ENCODE measurements at regions of chrX and their contacts with region 1.

Region 1: DNA sequence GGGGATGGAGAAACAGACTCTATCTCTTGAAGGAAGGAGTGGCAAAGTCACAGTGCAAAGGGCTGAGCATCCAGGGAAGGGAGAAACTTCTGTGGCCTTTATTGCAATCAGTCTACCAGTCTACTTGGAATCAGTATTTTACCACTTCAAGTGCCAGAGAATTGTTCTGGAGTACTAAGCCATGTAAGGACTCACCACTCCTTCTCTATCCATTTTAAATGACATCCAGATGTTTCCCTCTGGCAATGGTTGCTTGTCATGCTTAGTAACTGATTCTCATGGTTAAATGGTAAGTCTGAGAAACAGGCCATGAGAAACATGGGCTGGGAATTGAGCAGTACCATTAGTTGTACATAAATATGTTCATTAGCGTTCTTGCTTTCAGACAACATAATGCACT is 21.1 kb upstream of the SMIM10 start:
- DNase-seq: no peak
- H3K4me3 Mint-ChIP-seq: no peak overlapping the region
- H3K27ac Mint-ChIP-seq: no peak overlapping the region
- H3K4me1 Mint-ChIP-seq: no peaks in the 10 kb centered on the region
- H3K27me3 Mint-ChIP-seq: peaks cover 4% of the 10 kb centered on the region

Region 2: GRCh38 chrX:135003876-135004623 is 34.3 kb after region 1 on chrX:
- CTCF ChIA-PET with region 1: interaction called, 5 read pairs
- POLR2A ChIA-PET with region 1: no interaction called
- intact Hi-C with region 1: loop called (anchors 1 kb)
- DNase-seq: peak; percentile 93
- H3K4me3 Mint-ChIP-seq: peak overlapping the region; percentile 77
- H3K27ac Mint-ChIP-seq: peak overlapping the region; percentile 54
- H3K4me1 Mint-ChIP-seq: no peaks in the 10 kb centered on the region
- H3K27me3 Mint-ChIP-seq: no peaks in the 10 kb centered on the region

Region 3: GRCh38 chrX:135086197-135086854 is 116.6 kb after region 1 on chrX:
- CTCF ChIA-PET with region 1: interaction called, 13 read pairs
- POLR2A ChIA-PET with region 1: no interaction called
- intact Hi-C with region 1: loop called (anchors 1 kb)
- DNase-seq: peak; percentile 48
- H3K4me3 Mint-ChIP-seq: no peak overlapping the region
- H3K27ac Mint-ChIP-seq: peak overlapping the region; percentile 13
- H3K4me1 Mint-ChIP-seq: peaks cover 6% of the 10 kb centered on the region
- H3K27me3 Mint-ChIP-seq: peaks cover 1% of the 10 kb centered on the region

Region 4: GRCh38 chrX:135185795-135186443 is 216.2 kb after region 1 on chrX:
- CTCF ChIA-PET with region 1: no interaction called
- POLR2A ChIA-PET with region 1: no interaction called
- intact Hi-C with region 1: loop called (anchors 1 kb)
- DNase-seq: peak; percentile 39
- H3K4me3 Mint-ChIP-seq: no peak overlapping the region
- H3K27ac Mint-ChIP-seq: no peak overlapping the region
- H3K4me1 Mint-ChIP-seq: no peaks in the 10 kb centered on the region
- H3K27me3 Mint-ChIP-seq: peaks cover 4% of the 10 kb centered on the region

Region 5: DNA sequence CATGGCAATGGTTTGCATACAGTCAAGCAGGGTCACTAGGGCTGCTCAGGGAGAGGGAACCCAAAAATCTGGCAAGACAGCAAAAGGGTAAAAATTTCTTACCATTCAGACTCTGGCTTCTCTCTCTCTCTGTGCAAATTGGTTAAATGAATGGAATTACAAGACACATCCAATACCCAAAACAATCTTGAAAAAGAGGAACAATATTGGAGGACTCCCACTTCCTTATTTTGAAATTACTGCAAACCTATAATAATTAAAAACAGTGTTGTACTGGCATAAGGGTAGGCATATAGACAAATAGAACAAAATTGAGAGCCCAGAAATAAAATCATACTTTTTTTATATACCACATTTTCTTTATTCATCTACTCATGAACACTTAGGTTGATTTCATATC is 306.2 kb after region 1 on chrX:
- CTCF ChIA-PET with region 1: no interaction called
- POLR2A ChIA-PET with region 1: no interaction called
- intact Hi-C with region 1: no loop called
- DNase-seq: no peak
- H3K4me3 Mint-ChIP-seq: no peak overlapping the region
- H3K27ac Mint-ChIP-seq: no peak overlapping the region
- H3K4me1 Mint-ChIP-seq: peaks cover 8% of the 10 kb centered on the region
- H3K27me3 Mint-ChIP-seq: no peaks in the 10 kb centered on the region